ENCODE measurements at regions of chr4 and their contacts with region 1.

Region 1: DNA sequence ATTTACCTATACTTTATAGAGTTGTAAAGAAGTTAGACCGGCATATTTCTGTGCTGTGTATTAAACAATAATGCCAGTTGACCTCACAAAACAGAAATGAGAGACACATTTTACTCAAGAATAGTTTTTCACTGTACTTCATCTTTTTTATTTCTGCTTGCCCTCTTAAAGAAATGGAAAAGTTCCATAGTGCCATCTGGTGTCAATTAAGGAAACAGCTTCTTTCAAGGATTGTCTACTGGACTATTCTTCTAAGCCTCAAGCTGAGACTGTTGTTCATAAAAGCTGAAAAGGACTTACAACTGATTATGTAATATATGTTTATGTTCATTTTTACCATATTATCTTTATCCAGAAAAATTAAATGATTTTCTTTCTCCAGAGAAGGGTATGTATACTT is 1523.7 kb downstream of the ARAP2 start:
- DNase-seq: peak in 1 of 2 experiments; percentile 16
- H3K4me3 ChIP-seq: no peak overlapping the region
- H3K4me3 Mint-ChIP-seq: no peak overlapping the region
- H3K27ac Mint-ChIP-seq: no peak overlapping the region
- H3K4me1 ChIP-seq: peaks cover 11% of the 10 kb centered on the region; the same call in 1 of the 2 replicates
- H3K4me1 Mint-ChIP-seq: peaks cover 8% of the 10 kb centered on the region
- H3K27me3 ChIP-seq: no peaks in the 10 kb centered on the region
- H3K27me3 Mint-ChIP-seq: peaks cover under 1% of the 10 kb centered on the region
- CTCF ChIP-seq: peak; percentile 40 to 43

Region 2: DNA sequence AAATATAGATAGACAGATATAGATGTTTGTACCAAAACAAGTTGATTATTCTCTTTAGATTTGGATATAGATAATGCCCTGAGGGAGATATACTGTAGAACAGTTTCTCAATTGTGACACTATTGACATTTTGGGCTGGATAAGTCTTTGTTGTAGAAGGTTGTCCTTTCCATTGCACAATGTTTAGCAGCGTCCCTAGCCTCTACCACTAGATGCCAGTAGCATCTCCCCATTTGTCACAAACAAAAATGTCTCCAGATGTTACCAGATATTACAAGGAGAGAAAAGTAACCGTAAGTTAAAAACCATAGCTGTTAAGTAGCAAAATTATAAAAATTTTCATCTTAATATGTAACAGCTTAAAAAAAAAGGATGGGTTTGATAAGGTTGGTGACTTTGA is 1071.6 kb before region 1 on chr4:
- CTCF ChIA-PET with region 1: interaction called, 3 read pairs
- POLR2A ChIA-PET with region 1: no interaction called
- intact Hi-C with region 1: loop called (anchors 1 kb)
- DNase-seq: peak in 1 of 2 experiments; percentile 3
- H3K4me3 ChIP-seq: no peak overlapping the region
- H3K4me3 Mint-ChIP-seq: no peak overlapping the region
- H3K27ac Mint-ChIP-seq: no peak overlapping the region
- H3K4me1 ChIP-seq: no peaks in the 10 kb centered on the region
- H3K4me1 Mint-ChIP-seq: no peaks in the 10 kb centered on the region
- H3K27me3 ChIP-seq: no peaks in the 10 kb centered on the region
- H3K27me3 Mint-ChIP-seq: no peaks in the 10 kb centered on the region
- CTCF ChIP-seq: peak in 1 of 2 experiments; percentile 28

Region 3: GRCh38 chr4:34422472-34423175 is 297.9 kb before region 1 on chr4:
- CTCF ChIA-PET with region 1: no interaction called
- POLR2A ChIA-PET with region 1: no interaction called
- intact Hi-C with region 1: no loop called
- DNase-seq: no peak
- H3K4me3 ChIP-seq: no peak overlapping the region
- H3K4me3 Mint-ChIP-seq: no peak overlapping the region
- H3K27ac Mint-ChIP-seq: no peak overlapping the region
- H3K4me1 ChIP-seq: no peaks in the 10 kb centered on the region
- H3K4me1 Mint-ChIP-seq: no peaks in the 10 kb centered on the region
- H3K27me3 ChIP-seq: no peaks in the 10 kb centered on the region
- H3K27me3 Mint-ChIP-seq: no peaks in the 10 kb centered on the region
- CTCF ChIP-seq: no peak

Region 4: DNA sequence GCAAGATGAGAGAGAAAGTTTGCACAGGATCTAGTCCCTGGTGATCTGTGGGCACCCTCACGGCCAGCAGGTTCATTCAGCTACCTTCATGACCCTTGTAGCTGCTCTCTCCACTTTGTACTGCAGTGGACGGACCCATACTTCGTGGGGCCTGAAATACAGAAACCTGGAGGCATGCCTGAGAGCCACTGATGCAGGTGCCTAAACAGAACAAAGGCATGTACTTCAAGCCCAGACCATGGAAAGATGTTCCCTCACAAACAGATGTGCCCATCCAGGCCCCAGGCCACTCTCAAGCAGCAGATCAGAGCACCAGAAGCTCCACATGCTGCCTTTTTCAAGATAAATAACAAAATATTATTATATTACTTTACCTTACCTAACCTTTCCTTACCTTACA is 105.3 kb before region 1 on chr4:
- CTCF ChIA-PET with region 1: no interaction called
- POLR2A ChIA-PET with region 1: no interaction called
- intact Hi-C with region 1: no loop called
- DNase-seq: no peak
- H3K4me3 ChIP-seq: no peak overlapping the region
- H3K4me3 Mint-ChIP-seq: no peak overlapping the region
- H3K27ac Mint-ChIP-seq: no peak overlapping the region
- H3K4me1 ChIP-seq: no peaks in the 10 kb centered on the region
- H3K4me1 Mint-ChIP-seq: no peaks in the 10 kb centered on the region
- H3K27me3 ChIP-seq: no peaks in the 10 kb centered on the region
- H3K27me3 Mint-ChIP-seq: no peaks in the 10 kb centered on the region
- CTCF ChIP-seq: no peak

Measured in Caco-2 (cell line).